ENCODE measurements at regions of chr10 and their contacts with region 1.

Region 1: GRCh38 chr10:11647676-11648075 is 36.2 kb upstream of the USP6NL start:
- DNase-seq: no peak
- ATAC-seq: no peak
- H3K4me3 ChIP-seq: no peak overlapping the region
- H3K27ac ChIP-seq: no peak overlapping the region
- H3K4me1 ChIP-seq: no peaks in the 10 kb centered on the region
- H3K27me3 ChIP-seq: no peaks in the 10 kb centered on the region
- CTCF ChIP-seq: no peak

Region 2: GRCh38 chr10:11509036-11509435 is 138.6 kb before region 1 on chr10:
- CTCF ChIA-PET with region 1: no interaction called
- POLR2A ChIA-PET with region 1: interaction called, 24 read pairs
- intact Hi-C with region 1: no loop called
- DNase-seq: no peak
- ATAC-seq: no peak
- H3K4me3 ChIP-seq: no peak overlapping the region
- H3K27ac ChIP-seq: no peak overlapping the region
- H3K4me1 ChIP-seq: no peaks in the 10 kb centered on the region
- H3K27me3 ChIP-seq: no peaks in the 10 kb centered on the region
- CTCF ChIP-seq: no peak

Region 3: DNA sequence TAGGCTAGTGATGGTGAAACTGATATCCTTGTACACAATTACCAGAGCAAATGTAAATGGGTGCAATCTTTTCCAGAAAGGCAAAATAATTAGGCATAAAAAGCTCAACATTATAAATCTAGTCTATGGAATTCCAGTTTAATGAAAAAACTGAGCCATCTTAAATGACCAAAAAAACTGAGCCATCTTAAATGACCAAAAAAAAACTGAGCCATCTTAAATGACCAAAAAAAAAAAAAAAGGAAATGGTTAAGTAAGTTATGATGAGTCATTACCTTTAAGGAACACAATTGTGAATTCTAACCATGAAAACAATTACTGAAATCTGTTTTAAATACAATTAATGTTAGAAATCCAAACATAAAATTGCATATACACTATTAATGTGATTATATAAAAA is 61.5 kb before region 1 on chr10:
- CTCF ChIA-PET with region 1: no interaction called
- POLR2A ChIA-PET with region 1: no interaction called
- intact Hi-C with region 1: no loop called
- DNase-seq: no peak
- ATAC-seq: no peak
- H3K4me3 ChIP-seq: no peak overlapping the region
- H3K27ac ChIP-seq: no peak overlapping the region
- H3K4me1 ChIP-seq: no peaks in the 10 kb centered on the region; the same call in 1 of the 2 replicates
- H3K27me3 ChIP-seq: no peaks in the 10 kb centered on the region
- CTCF ChIP-seq: no peak

Region 4: DNA sequence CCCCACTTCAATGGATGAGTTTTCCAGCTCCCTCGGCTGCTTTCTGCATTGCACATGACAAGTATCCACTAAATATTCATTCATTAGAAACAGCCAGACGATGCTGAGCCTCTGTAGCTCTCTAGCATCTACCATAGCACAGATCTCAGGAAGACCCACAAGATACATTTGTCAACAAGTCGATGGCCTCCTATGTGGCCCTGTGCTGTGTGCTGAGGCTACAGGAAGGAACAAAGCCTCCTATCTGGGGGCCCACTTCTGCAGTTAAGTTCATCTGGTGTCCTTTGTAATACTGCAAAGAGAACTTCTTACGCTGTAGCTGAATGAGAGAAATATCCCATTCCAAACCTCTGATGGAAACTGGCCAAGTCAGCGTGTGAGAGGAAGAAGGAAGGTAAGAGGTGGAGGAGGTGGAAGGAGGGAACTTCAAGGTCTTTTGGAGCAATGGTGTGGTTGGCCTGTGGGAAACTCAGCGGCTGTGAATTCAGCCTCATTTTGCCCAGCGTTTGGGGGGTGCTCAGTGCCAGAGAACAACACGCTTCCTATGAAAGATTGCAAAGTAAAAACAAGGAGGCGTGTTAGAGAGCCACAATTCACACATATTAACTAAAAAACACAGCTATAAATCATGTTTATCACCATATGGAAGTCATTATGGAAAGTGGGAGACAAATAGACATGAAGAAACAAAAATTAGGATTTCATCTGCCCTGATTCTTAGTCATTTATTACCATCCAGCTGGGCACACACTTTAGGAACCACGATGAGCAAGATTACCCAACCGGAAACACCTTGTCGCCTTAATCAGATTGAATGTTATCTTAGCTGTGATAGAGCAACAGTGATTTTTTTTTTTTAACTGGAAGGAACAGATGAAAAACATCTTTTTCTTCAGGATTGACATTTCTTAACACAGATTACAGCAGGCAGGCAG is 25.9 kb after region 1 on chr10:
- CTCF ChIA-PET with region 1: no interaction called
- POLR2A ChIA-PET with region 1: interaction called, 37 read pairs
- intact Hi-C with region 1: no loop called
- DNase-seq: no peak
- ATAC-seq: no peak
- H3K4me3 ChIP-seq: no peak overlapping the region
- H3K27ac ChIP-seq: no peak overlapping the region
- H3K4me1 ChIP-seq: no peaks in the 10 kb centered on the region
- H3K27me3 ChIP-seq: no peaks in the 10 kb centered on the region
- CTCF ChIP-seq: no peak

Region 5: DNA sequence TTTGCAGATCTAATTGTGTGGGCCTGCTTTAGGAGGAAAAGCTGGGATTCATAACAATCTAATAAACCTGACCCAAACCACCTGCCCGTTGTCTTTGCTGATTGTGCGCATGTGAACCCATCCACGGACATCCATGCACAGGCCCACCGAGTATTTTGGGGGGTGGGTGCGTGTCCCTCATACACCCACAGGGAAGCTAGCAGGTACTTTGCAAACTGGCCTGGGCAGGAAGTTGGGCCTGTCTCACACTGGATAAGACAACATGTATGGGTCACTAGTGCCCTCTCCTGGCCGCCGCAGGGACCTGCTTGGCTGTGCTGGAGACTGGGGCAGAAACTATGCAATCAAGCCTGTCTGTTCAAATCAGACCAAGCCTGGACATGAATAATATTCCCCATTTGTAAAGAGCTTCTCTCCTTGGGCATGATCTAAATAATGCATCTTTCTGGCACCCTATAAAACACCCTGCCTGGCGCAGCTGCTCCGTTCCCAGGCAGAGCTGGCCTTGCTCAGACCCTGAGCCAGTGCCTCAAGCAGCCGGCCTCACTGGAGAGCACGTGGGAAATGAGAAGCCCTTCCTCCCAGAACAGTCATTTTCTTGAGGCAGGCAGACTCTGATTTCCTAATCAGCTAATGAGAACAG is 110.3 kb after region 1 on chr10:
- CTCF ChIA-PET with region 1: no interaction called
- POLR2A ChIA-PET with region 1: interaction called, 18 read pairs
- intact Hi-C with region 1: no loop called
- DNase-seq: peak; percentile 72
- ATAC-seq: peak; percentile 99
- H3K4me3 ChIP-seq: no peak overlapping the region
- H3K27ac ChIP-seq: no peak overlapping the region
- H3K4me1 ChIP-seq: no peaks in the 10 kb centered on the region
- H3K27me3 ChIP-seq: no peaks in the 10 kb centered on the region
- CTCF ChIP-seq: peak; percentile 77

Region 6: DNA sequence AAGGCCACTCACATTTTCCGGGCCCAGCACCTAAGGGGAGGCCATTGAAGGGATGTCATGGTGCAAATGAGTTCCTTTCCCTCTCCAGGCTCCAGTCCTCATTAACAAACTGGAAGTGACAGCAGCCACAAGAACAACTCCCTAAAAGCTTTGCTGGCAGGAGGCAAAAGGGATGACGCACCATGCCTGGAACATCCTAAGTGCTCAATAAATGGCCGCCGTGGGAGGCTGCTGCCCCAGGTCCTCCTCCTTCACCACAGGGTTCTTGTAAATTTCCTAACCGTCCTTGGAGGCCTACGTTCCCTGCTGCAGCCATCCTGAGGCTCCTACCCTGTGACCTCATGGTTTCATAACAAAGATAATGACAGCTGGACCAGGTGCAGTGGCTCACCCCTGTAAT is 660.4 kb after region 1 on chr10:
- CTCF ChIA-PET with region 1: no interaction called
- POLR2A ChIA-PET with region 1: interaction called, 16 read pairs
- intact Hi-C with region 1: no loop called
- DNase-seq: no peak
- ATAC-seq: no peak
- H3K4me3 ChIP-seq: no peak overlapping the region
- H3K27ac ChIP-seq: no peak overlapping the region
- H3K4me1 ChIP-seq: no peaks in the 10 kb centered on the region
- H3K27me3 ChIP-seq: no peaks in the 10 kb centered on the region
- CTCF ChIP-seq: no peak

Measured in PC-3 (cell line).